Activated naive CD4-positive, alpha-beta T cell treated with anti-CD3 and anti-CD28 coated beads for 36 hours (primary cell): ENCODE measurements at regions of chr19 and their contacts with region 1.

Region 1: DNA sequence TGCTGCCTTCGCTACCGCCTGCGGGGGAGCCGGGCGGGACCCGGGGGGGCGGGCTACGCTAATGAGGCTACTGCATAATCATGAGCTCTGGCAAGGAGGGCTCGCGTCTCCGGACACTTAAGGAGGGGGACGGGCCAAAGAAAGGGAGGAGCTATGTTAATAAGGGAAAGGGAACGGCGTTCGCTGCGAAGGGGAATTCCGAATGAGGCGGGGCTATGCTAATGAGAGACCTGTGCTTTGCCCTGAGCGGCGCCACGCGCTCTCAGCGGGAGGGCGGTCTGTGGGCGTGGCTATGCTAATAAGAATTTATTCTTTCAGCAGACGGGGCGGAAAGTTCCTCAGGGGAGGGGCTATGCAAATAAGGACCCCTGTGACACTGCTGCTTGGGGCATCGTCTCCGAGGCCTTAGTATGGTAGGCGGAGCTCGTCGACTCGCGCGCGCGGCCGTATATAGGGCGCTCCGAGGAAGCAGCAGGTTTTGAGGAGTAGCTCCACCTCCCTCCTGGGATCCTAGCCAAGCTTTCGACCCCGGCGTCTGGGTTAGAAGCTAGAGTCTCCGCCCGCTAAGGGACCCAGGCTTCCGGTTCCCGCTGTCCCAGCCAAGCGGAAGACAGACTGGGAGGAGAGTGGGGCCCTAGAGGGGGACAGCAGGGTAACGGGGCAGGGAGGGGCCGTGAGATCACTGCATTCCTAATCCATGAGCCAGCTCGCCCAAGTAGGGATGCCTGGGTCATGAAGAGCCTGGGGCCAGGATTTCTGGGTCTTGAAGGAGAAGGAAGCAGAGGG is at the start of gene RRAS:
- DNase-seq: peak; percentile 100
- H3K4me3 Mint-ChIP-seq: peak within 1 kb of the TSS; percentile 99
- H3K27ac Mint-ChIP-seq: peak within 1 kb of the TSS; percentile 99
- H3K4me1 Mint-ChIP-seq: peaks cover 43% of the 10 kb centered on the region
- H3K27me3 Mint-ChIP-seq: no peaks in the 10 kb centered on the region
- total RNA-seq, gene RRAS: 7.2 to 7.8 TPM

Region 2: GRCh38 chr19:49487277-49488045 is 152.8 kb before region 1 on chr19 and contains the start of gene RPL13A:
- CTCF ChIA-PET with region 1: no interaction called
- intact Hi-C with region 1: loop called (anchors 2 kb)
- DNase-seq: peak; percentile 100
- H3K4me3 Mint-ChIP-seq: peak within 1 kb of the TSS; percentile 99
- H3K27ac Mint-ChIP-seq: peak within 1 kb of the TSS; percentile 95
- H3K4me1 Mint-ChIP-seq: peaks cover 28% of the 10 kb centered on the region
- H3K27me3 Mint-ChIP-seq: no peaks in the 10 kb centered on the region
- total RNA-seq, gene RPL13A: 4,441 to 4,607 TPM

Region 3: GRCh38 chr19:49533551-49534488 is 106.5 kb before region 1 on chr19:
- CTCF ChIA-PET with region 1: no interaction called
- intact Hi-C with region 1: no loop called
- DNase-seq: peak; percentile 82
- H3K4me3 Mint-ChIP-seq: peak overlapping the region; percentile 83
- H3K27ac Mint-ChIP-seq: no peak overlapping the region
- H3K4me1 Mint-ChIP-seq: peaks cover 21% of the 10 kb centered on the region
- H3K27me3 Mint-ChIP-seq: no peaks in the 10 kb centered on the region

Region 4: GRCh38 chr19:49580264-49581006 is 59.9 kb before region 1 on chr19 and contains the start of gene NOSIP:
- CTCF ChIA-PET with region 1: no interaction called
- intact Hi-C with region 1: loop called (anchors 1 kb)
- DNase-seq: peak; percentile 98
- H3K4me3 Mint-ChIP-seq: peak within 1 kb of the TSS; percentile 85
- H3K27ac Mint-ChIP-seq: peak within 1 kb of the TSS; percentile 82
- H3K4me1 Mint-ChIP-seq: peaks cover 36% of the 10 kb centered on the region
- H3K27me3 Mint-ChIP-seq: no peaks in the 10 kb centered on the region
- total RNA-seq, gene NOSIP: 76.4 to 77.4 TPM

Region 5: DNA sequence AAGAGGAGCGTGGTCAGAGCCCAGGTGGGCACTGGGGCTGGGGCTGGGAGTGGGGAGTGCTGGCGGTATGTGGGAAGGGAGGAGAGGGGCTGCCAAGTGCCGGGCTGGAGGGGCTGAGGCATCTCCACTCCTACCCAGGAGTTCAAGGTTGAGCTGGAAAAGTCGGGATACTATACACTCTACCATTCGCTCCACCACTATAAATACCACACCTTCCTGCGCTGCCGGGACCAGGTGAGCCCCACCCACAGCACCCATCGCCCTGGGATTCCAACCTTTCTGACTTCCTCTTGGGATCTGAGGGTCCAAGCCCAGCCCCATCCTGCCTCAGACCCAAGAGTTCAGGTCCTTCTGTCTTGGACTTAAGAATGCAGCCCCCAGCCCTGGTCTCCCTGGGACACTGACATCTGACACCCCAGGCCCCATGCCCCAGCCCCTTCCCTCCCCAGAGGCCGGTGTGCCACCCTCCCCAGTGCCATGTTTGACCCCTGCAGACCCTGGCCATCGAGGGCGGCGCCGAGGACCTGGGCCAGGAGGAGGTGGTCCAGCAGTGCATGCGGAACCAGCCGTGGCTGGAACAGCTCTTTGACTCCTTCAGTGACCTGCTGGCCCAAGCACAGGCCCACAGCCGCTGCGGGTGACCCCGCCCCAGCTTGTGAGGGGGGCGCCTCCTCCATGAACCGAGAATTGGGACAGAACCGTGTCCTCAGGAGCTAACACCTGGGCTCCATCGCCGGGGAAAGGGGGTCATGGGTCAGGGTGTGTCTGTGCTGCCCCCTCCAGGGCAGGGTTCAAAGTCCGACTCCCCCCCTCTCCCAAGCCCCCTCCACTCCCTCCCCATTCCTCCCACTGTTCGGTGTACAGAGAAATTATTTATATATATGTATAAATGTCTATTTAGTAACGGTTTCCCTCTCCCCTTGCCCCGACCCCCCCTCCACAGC is 15.1 kb before region 1 on chr19:
- CTCF ChIA-PET with region 1: no interaction called
- intact Hi-C with region 1: no loop called
- DNase-seq: no peak
- H3K4me3 Mint-ChIP-seq: no peak overlapping the region
- H3K27ac Mint-ChIP-seq: no peak overlapping the region
- H3K4me1 Mint-ChIP-seq: no peaks in the 10 kb centered on the region
- H3K27me3 Mint-ChIP-seq: no peaks in the 10 kb centered on the region

Region 6: GRCh38 chr19:49676690-49677231 is 36.5 kb after region 1 on chr19:
- CTCF ChIA-PET with region 1: interaction called, 6 read pairs
- intact Hi-C with region 1: loop called (anchors 1 kb)
- DNase-seq: peak; percentile 100
- H3K4me3 Mint-ChIP-seq: peak overlapping the region; percentile 91
- H3K27ac Mint-ChIP-seq: peak overlapping the region; percentile 99
- H3K4me1 Mint-ChIP-seq: peaks cover 29% of the 10 kb centered on the region
- H3K27me3 Mint-ChIP-seq: no peaks in the 10 kb centered on the region

Region 7: DNA sequence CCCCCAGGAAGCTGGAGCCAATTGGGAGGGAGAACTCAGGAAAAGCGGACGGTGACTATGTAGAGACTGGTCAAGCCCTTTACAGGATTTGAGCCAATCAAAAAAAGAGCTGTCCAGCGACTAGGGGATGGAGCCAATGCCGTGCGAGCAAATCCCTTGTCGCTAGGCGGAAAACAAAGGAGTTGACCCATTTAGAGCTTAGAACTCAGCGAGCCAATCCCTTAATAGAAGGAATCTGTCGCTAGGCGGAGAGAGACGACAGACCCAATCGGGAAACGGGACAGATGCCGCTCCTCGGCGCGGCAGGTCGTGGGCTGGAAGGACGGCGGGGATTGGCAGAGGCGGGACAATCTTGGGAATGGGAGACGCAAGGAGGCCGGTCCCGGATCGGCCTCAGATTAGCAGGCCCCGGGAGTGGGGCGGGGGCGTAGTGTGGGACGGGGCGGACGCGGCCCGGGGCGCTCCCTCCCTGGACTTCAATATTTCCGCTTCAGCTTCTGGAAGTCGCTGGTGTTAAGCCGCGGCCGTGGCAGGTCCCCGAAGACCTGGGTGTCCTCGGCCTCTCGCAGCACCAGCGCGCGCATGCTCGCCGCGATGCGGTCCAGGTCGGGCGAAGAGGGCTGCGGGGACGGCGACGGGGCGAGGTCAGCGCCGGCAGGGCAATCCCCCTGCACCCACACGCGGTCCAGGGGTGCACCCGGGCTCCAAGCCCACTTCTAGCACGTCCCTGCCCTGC is 229.3 kb after region 1 on chr19:
- CTCF ChIA-PET with region 1: no interaction called
- intact Hi-C with region 1: loop called (anchors 2 kb)
- DNase-seq: peak; percentile 95
- H3K4me3 Mint-ChIP-seq: no peak overlapping the region
- H3K27ac Mint-ChIP-seq: no peak overlapping the region
- H3K4me1 Mint-ChIP-seq: peaks cover 47% of the 10 kb centered on the region
- H3K27me3 Mint-ChIP-seq: no peaks in the 10 kb centered on the region

Region 8: GRCh38 chr19:50025024-50025789 is 384.9 kb after region 1 on chr19 and contains the start of gene VRK3:
- CTCF ChIA-PET with region 1: no interaction called
- intact Hi-C with region 1: loop called (anchors 1 kb)
- DNase-seq: peak; percentile 99
- H3K4me3 Mint-ChIP-seq: peak within 1 kb of the TSS; percentile 95
- H3K27ac Mint-ChIP-seq: peak within 1 kb of the TSS; percentile 97
- H3K4me1 Mint-ChIP-seq: peaks cover 50% of the 10 kb centered on the region
- H3K27me3 Mint-ChIP-seq: no peaks in the 10 kb centered on the region
- total RNA-seq, gene VRK3: 45.7 to 54.3 TPM